ENCODE measurements at regions of chr1 and their contacts with region 1.

Region 1: DNA sequence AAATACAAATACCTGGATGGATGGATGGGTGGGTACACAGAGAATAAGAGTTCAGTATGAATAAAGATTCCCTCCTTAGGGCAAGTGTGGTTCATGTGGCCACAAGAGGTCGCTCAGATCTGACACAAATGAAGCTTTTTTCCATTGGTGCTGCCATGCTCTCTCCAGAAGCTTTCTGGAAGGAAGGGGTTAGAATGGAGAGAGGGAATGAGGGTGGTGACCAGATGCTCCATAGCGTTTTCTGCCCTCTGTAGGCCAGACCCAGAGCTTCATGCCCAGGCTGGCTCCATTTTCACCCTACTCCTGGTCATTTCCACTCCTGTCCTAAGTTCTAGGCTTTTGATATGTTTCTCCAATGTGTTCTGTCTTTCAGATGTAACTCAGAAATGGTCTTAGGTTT is 3.3 kb upstream of the FCRL6 start:
- DNase-seq: peak; percentile 71
- H3K4me3 Mint-ChIP-seq: no peak overlapping the region
- H3K27ac Mint-ChIP-seq: no peak overlapping the region
- H3K4me1 Mint-ChIP-seq: peaks cover 13% of the 10 kb centered on the region
- H3K27me3 Mint-ChIP-seq: no peaks in the 10 kb centered on the region

Region 2: GRCh38 chr1:159780583-159781582 is 18.0 kb before region 1 on chr1 and contains the start of gene DUSP23:
- CTCF ChIA-PET with region 1: interaction called, 27 read pairs
- intact Hi-C with region 1: loop called (anchors 1 kb)
- DNase-seq: peak; percentile 96
- H3K4me3 Mint-ChIP-seq: peak within 1 kb of the TSS; percentile 73
- H3K27ac Mint-ChIP-seq: no peak within 1 kb of the TSS
- H3K4me1 Mint-ChIP-seq: peaks cover 7% of the 10 kb centered on the region
- H3K27me3 Mint-ChIP-seq: no peaks in the 10 kb centered on the region
- total RNA-seq, gene DUSP23: 13.0 to 14.1 TPM

Region 3: DNA sequence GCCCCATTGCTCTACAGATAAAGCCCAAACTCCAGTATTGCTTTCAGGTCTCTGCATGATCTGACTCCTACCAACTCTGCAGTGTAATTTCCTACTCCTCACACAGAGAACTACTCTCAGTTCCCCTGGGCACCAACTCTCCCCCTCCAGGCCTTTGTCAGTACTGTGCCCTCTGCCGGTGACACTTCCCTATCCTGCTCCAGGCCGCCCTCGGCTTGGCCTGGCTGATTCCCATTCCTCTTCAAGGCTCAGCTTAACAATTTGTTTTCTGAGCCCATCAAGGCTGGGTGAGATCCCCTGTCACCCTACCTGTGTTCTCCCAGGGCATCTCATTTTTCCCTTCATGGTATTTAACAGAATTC is 30.4 kb after region 1 on chr1:
- CTCF ChIA-PET with region 1: interaction called, 14 read pairs
- intact Hi-C with region 1: no loop called
- DNase-seq: no peak
- H3K4me3 Mint-ChIP-seq: no peak overlapping the region
- H3K27ac Mint-ChIP-seq: no peak overlapping the region
- H3K4me1 Mint-ChIP-seq: peaks cover 34% of the 10 kb centered on the region
- H3K27me3 Mint-ChIP-seq: no peaks in the 10 kb centered on the region

Region 4: GRCh38 chr1:159872881-159873280 is 74.0 kb after region 1 on chr1:
- CTCF ChIA-PET with region 1: interaction called, 23 read pairs
- intact Hi-C with region 1: no loop called
- DNase-seq: no peak
- H3K4me3 Mint-ChIP-seq: no peak overlapping the region
- H3K27ac Mint-ChIP-seq: no peak overlapping the region
- H3K4me1 Mint-ChIP-seq: no peaks in the 10 kb centered on the region
- H3K27me3 Mint-ChIP-seq: peaks cover 4% of the 10 kb centered on the region

Region 5: GRCh38 chr1:160046494-160047110 is 247.7 kb after region 1 on chr1:
- CTCF ChIA-PET with region 1: no interaction called
- intact Hi-C with region 1: no loop called
- DNase-seq: peak; percentile 56
- H3K4me3 Mint-ChIP-seq: peak overlapping the region; percentile 45
- H3K27ac Mint-ChIP-seq: no peak overlapping the region
- H3K4me1 Mint-ChIP-seq: peaks cover 9% of the 10 kb centered on the region
- H3K27me3 Mint-ChIP-seq: peaks cover 4% of the 10 kb centered on the region

Region 6: DNA sequence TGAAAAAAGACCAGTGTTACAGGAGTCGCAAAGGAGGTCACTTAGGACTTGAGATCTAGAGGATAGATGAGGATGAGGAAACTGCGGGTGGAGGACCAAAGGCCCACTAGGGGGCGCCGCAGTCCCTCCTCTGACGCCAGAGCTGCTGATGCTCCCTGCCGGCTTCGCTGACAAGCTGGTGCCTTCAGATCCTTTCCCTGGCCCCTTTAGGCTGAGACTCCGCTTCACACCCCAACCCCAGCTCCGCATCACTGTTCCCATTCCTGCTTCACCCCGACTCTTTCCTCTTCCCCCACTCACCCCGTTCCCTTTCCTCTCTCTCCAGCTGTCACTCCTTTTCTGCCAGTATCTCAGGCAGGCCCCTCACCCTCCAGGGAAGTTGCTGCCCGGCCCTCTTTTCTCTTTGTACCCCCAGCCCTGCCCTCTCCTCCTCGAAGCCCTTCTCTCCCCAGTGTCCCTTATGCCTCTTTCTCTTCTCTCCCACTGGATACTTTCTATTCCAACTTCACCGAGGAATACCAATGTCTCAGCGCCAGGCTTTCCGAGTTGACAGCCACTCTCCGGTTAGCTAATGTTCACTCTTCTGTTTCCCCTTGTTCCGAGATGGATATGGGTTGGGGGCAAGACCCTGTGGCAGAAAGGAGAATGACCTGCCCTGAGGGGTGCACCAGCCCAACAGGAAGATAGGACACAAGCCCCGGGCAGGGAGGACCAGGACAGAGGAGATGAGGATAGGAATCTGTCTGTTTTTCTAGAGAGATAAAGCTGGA is 287.0 kb after region 1 on chr1:
- CTCF ChIA-PET with region 1: no interaction called
- intact Hi-C with region 1: loop called (anchors 5 kb)
- DNase-seq: peak; percentile 88
- H3K4me3 Mint-ChIP-seq: no peak overlapping the region
- H3K27ac Mint-ChIP-seq: no peak overlapping the region
- H3K4me1 Mint-ChIP-seq: peaks cover 5% of the 10 kb centered on the region
- H3K27me3 Mint-ChIP-seq: peaks cover 17% of the 10 kb centered on the region

Measured in activated naive CD4-positive, alpha-beta T cell treated with anti-CD3 and anti-CD28 coated beads for 36 hours (primary cell).